ENCODE measurements at regions of chr11 and their contacts with region 1.

Region 1: DNA sequence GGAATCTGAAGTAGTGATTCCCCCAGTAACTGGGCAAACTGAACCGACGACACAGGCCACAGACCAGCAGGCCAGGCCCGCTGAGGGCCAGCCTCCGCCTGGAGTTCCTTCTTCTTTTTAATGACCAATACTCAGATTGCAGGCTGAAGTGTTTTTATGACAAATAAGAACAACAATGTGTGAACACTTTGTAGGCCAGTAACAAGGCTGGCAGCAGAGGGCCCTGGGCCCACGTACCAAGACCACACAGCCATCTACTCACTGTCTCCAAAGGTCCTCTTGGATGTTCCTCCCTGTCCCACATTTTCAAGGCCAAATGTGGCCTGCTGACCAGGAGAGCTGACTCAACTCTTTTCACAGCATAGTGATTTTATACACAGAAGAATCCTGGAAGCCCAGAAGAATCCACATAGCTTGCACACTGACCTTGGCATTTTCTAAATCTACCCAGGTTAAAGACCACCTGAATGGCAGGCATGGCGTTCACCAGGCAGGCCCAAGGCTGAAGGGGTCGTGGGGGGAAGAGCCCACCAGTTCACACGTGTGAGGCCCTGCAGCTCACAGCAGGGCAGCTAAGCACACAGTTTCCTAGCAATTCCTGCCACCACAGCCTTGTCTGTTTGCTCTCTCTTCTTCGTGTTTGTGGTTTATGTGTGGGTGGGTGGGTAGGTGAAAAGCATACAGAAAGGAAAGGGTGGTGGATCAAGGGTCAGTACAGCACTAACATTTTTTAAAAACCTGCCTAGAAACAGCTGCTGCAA is 13.3 kb downstream of the SMCO4 start:
- DNase-seq: no peak
- ATAC-seq: peak; percentile 2 to 55 (median 42)
- H3K4me3 ChIP-seq: peak overlapping the region in 1 of 10 donors; percentile 9
- H3K27ac ChIP-seq: peak overlapping the region; percentile 63 to 92 (median 82)
- H3K4me1 ChIP-seq: peaks cover 15 to 91% (median 73%) of the 10 kb centered on the region in 9 donors
- H3K27me3 ChIP-seq: no peaks in the 10 kb centered on the region
- CTCF ChIP-seq: no peak

Region 2: GRCh38 chr11:93396316-93396715 is 133.6 kb before region 1 on chr11:
- intact Hi-C with region 1: loop called in 2 of 10 experiments (anchors 10 kb)
- DNase-seq: no peak
- ATAC-seq: no peak
- H3K4me3 ChIP-seq: no peak overlapping the region
- H3K27ac ChIP-seq: no peak overlapping the region
- H3K4me1 ChIP-seq: peaks cover 0 to 6% (median 0%) of the 10 kb centered on the region in 9 donors
- H3K27me3 ChIP-seq: no peaks in the 10 kb centered on the region
- CTCF ChIP-seq: no peak